ENCODE measurements at regions of chr1 and their contacts with region 1.

Region 1: DNA sequence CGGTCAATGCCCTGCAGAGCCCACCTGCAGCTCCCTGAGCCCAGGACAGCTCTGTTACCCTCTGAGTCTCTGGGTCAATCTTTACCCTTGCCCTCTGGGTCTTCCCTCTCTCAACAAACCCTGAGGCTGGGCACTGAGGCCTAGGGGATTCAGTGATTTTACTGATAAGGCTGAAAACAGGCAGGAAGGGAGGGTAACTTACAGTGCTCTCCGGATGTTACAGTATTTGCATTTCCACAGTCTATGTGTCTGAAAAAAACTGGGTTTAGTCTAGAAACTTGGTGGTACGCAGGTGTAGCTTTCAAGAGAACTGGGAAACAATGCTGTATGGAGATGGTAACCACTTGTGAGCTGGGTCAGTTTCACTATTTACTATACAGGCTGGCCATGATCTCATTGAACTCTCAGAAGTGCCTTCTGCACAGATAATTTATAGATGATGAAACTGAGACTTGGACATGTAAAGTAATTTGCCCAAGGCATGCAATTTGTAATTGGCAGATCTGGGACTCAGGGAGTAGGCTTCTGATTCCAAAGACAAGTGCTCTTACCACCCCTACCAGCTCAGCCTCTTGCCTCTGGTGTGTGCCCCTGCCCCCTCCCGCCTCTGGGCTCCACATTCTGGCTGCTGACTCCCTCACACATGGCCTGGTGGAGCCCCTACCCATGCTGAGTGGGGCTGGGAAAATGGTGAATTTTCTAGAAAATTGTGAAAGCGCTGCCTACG is 48.8 kb downstream of the TENT5C start:
- DNase-seq: peak; percentile 44
- ATAC-seq: peak; percentile 5
- H3K4me3 Mint-ChIP-seq: peak overlapping the region; percentile 83
- H3K27ac Mint-ChIP-seq: peak overlapping the region; percentile 84
- H3K4me1 Mint-ChIP-seq: peaks cover 67% of the 10 kb centered on the region
- H3K27me3 Mint-ChIP-seq: peaks cover 4% of the 10 kb centered on the region

Region 2: GRCh38 chr1:117572546-117572945 is 82.1 kb before region 1 on chr1:
- POLR2A ChIA-PET with region 1: no interaction called
- DNase-seq: peak; percentile 55
- ATAC-seq: peak; percentile 93
- H3K4me3 Mint-ChIP-seq: peak overlapping the region; percentile 64
- H3K27ac Mint-ChIP-seq: peak overlapping the region; percentile 80
- H3K4me1 Mint-ChIP-seq: peaks cover 27% of the 10 kb centered on the region
- H3K27me3 Mint-ChIP-seq: peaks cover 8% of the 10 kb centered on the region

Region 3: GRCh38 chr1:117605774-117606648 is 48.6 kb before region 1 on chr1 and contains the start of gene TENT5C:
- POLR2A ChIA-PET with region 1: interaction called, 116 read pairs
- DNase-seq: peak; percentile 99
- ATAC-seq: peak; percentile 87
- H3K4me3 Mint-ChIP-seq: peak within 1 kb of the TSS; percentile 94
- H3K27ac Mint-ChIP-seq: peak within 1 kb of the TSS; percentile 91
- H3K4me1 Mint-ChIP-seq: peaks cover 34% of the 10 kb centered on the region
- H3K27me3 Mint-ChIP-seq: peaks cover 22% of the 10 kb centered on the region
- total RNA-seq, gene TENT5C: 18.4 to 18.8 TPM

Region 4: GRCh38 chr1:117683571-117684285 is 29.1 kb after region 1 on chr1:
- POLR2A ChIA-PET with region 1: no interaction called
- DNase-seq: no peak
- ATAC-seq: no peak
- H3K4me3 Mint-ChIP-seq: no peak overlapping the region
- H3K27ac Mint-ChIP-seq: no peak overlapping the region
- H3K4me1 Mint-ChIP-seq: peaks cover 2% of the 10 kb centered on the region
- H3K27me3 Mint-ChIP-seq: peaks cover 9% of the 10 kb centered on the region

Region 5: DNA sequence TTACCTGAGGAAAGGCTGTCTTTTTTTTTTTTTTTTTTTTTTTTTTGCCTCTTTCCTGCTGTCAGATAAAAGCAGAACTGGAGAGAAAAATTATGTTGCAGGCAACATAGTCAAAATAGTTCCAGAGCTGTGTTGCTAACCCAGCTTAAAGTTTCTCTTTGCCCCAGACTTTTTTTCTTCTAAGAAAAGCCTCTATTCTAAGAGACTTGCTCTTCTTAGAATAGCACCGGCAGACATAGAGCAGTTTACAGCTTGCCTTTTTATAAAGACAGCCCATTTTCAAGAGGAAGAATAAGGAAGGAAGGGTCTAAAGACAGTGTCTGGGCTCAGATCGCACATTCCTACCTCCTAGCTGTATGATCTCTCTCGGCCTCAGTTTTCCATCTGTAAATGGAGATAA is 39.9 kb after region 1 on chr1:
- POLR2A ChIA-PET with region 1: interaction called, 13 read pairs
- DNase-seq: no peak
- ATAC-seq: peak; percentile 98
- H3K4me3 Mint-ChIP-seq: peak overlapping the region; percentile 58
- H3K27ac Mint-ChIP-seq: peak overlapping the region; percentile 71
- H3K4me1 Mint-ChIP-seq: peaks cover 27% of the 10 kb centered on the region
- H3K27me3 Mint-ChIP-seq: peaks cover 39% of the 10 kb centered on the region